ENCODE measurements at regions of chr18 and their contacts with region 1.

Region 1: DNA sequence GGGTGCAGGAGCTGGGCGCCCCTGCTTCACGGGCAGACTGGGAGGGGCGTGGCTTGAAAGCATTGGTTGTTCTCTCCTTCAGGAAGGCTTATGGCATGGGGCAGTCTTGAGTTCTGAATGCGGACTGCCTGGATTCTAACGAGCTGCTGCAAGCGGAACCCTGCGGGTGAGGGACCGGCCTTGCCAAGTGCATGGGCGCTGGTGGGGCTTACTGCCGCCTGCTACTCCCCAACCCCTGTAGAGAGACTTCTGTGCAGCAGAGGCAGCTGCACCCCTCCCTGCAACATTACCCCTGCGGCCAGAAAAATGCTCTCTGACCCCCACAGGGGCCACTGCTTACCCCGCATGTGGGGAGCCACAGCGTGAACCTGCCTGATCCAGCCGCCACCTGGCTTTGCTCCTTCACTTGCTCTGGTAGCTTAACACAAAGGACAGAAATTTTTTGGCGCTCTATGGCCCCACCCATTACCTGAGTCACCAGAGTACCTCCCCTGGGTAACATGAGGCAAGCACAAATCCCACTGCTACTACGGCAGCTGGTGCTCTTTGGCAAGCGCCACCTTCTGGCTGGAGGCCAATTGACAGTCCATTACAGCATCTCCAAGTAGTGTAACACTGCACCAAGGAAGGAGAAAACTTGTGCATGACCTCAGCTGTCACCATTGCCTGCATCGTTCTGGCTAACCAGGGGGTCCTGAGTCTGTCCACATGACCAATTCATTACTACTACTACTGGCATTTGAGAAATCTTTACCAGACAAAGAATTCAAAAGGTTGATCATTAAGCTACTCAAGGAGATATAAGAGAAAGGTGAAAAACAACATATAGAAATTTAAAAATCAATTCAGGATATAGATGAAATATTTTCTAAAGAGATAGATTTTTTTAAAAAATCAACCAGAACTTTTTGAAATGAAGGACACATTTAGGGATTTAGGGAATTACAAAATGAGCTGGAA is 35.4 kb downstream of the MYL12B start:
- DNase-seq: peak; percentile 97
- ATAC-seq: peak; percentile 98
- H3K4me3 Mint-ChIP-seq: peak overlapping the region; percentile 89
- H3K27ac Mint-ChIP-seq: peak overlapping the region; percentile 81
- H3K4me1 Mint-ChIP-seq: peaks cover 7% of the 10 kb centered on the region
- H3K27me3 Mint-ChIP-seq: peaks cover 28% of the 10 kb centered on the region

Region 2: GRCh38 chr18:3261371-3262246 is 35.7 kb before region 1 on chr18 and contains the start of gene MYL12B:
- CTCF ChIA-PET with region 1: interaction called, 4 read pairs
- POLR2A ChIA-PET with region 1: interaction called, 11 read pairs
- DNase-seq: peak; percentile 87
- ATAC-seq: peak; percentile 74
- H3K4me3 Mint-ChIP-seq: peak within 1 kb of the TSS; percentile 90
- H3K27ac Mint-ChIP-seq: peak within 1 kb of the TSS; percentile 100
- H3K4me1 Mint-ChIP-seq: peaks cover 78% of the 10 kb centered on the region
- H3K27me3 Mint-ChIP-seq: no peaks in the 10 kb centered on the region
- total RNA-seq, gene MYL12B: 402 to 404 TPM

Region 3: GRCh38 chr18:3281456-3282400 is 15.6 kb before region 1 on chr18:
- CTCF ChIA-PET with region 1: interaction called, 37 read pairs
- POLR2A ChIA-PET with region 1: interaction called, 4 read pairs
- DNase-seq: no peak
- ATAC-seq: peak; percentile 82
- H3K4me3 Mint-ChIP-seq: no peak overlapping the region
- H3K27ac Mint-ChIP-seq: no peak overlapping the region
- H3K4me1 Mint-ChIP-seq: no peaks in the 10 kb centered on the region
- H3K27me3 Mint-ChIP-seq: peaks cover 5% of the 10 kb centered on the region

Region 4: GRCh38 chr18:3323900-3324299 is 26.6 kb after region 1 on chr18:
- CTCF ChIA-PET with region 1: interaction called, 15 read pairs
- POLR2A ChIA-PET with region 1: no interaction called
- DNase-seq: no peak
- ATAC-seq: no peak
- H3K4me3 Mint-ChIP-seq: no peak overlapping the region
- H3K27ac Mint-ChIP-seq: no peak overlapping the region
- H3K4me1 Mint-ChIP-seq: peaks cover 3% of the 10 kb centered on the region
- H3K27me3 Mint-ChIP-seq: peaks cover 2% of the 10 kb centered on the region

Region 5: GRCh38 chr18:3447895-3448837 is 150.9 kb after region 1 on chr18:
- CTCF ChIA-PET with region 1: interaction called, 80 read pairs
- POLR2A ChIA-PET with region 1: interaction called, 16 read pairs
- DNase-seq: peak; percentile 90
- ATAC-seq: peak; percentile 72
- H3K4me3 Mint-ChIP-seq: peak overlapping the region; percentile 95
- H3K27ac Mint-ChIP-seq: peak overlapping the region; percentile 93
- H3K4me1 Mint-ChIP-seq: peaks cover 25% of the 10 kb centered on the region
- H3K27me3 Mint-ChIP-seq: peaks cover under 1% of the 10 kb centered on the region

Region 6: GRCh38 chr18:3604498-3605408 is 307.4 kb after region 1 on chr18:
- CTCF ChIA-PET with region 1: interaction called, 10 read pairs
- POLR2A ChIA-PET with region 1: interaction called, 4 read pairs
- DNase-seq: peak; percentile 52
- ATAC-seq: peak; percentile 71
- H3K4me3 Mint-ChIP-seq: no peak overlapping the region
- H3K27ac Mint-ChIP-seq: no peak overlapping the region
- H3K4me1 Mint-ChIP-seq: peaks cover 27% of the 10 kb centered on the region
- H3K27me3 Mint-ChIP-seq: no peaks in the 10 kb centered on the region